ENCODE measurements at regions of chr1 and their contacts with region 1.

Region 1: GRCh38 chr1:62003777-62004176 is 190.9 kb upstream of the L1TD1 start:
- DNase-seq: no peak
- H3K4me3 ChIP-seq: no peak overlapping the region
- H3K27ac ChIP-seq: no peak overlapping the region
- H3K4me1 ChIP-seq: no peaks in the 10 kb centered on the region
- H3K27me3 ChIP-seq: no peaks in the 10 kb centered on the region
- CTCF ChIP-seq: no peak

Region 2: DNA sequence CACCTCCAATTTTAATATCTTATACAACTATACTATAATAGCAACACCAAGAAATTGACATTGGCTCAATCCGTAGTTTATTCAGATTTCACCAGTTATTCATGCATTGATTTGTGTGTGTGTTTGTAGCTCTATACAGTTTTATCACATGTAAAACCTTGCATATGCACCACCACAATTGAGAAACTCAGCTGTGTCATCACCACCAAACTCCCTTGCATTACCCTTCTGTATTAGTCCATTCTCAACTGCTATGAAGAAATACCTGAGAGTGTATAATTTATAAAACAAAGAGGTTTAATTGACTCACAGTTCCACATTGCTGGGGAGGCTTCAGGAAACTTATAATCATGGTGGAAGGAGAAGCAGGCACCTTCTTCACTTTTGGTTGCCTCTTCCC is 99.4 kb before region 1 on chr1:
- CTCF ChIA-PET with region 1: no interaction called
- POLR2A ChIA-PET with region 1: no interaction called
- intact Hi-C with region 1: no loop called
- DNase-seq: no peak
- H3K4me3 ChIP-seq: no peak overlapping the region
- H3K27ac ChIP-seq: no peak overlapping the region
- H3K4me1 ChIP-seq: no peaks in the 10 kb centered on the region
- H3K27me3 ChIP-seq: no peaks in the 10 kb centered on the region
- CTCF ChIP-seq: no peak

Region 3: GRCh38 chr1:61931587-61932279 is 72.0 kb before region 1 on chr1:
- CTCF ChIA-PET with region 1: no interaction called
- POLR2A ChIA-PET with region 1: interaction called, 15 read pairs
- intact Hi-C with region 1: no loop called
- DNase-seq: no peak
- H3K4me3 ChIP-seq: no peak overlapping the region
- H3K27ac ChIP-seq: no peak overlapping the region
- H3K4me1 ChIP-seq: no peaks in the 10 kb centered on the region
- H3K27me3 ChIP-seq: no peaks in the 10 kb centered on the region
- CTCF ChIP-seq: no peak

Region 4: DNA sequence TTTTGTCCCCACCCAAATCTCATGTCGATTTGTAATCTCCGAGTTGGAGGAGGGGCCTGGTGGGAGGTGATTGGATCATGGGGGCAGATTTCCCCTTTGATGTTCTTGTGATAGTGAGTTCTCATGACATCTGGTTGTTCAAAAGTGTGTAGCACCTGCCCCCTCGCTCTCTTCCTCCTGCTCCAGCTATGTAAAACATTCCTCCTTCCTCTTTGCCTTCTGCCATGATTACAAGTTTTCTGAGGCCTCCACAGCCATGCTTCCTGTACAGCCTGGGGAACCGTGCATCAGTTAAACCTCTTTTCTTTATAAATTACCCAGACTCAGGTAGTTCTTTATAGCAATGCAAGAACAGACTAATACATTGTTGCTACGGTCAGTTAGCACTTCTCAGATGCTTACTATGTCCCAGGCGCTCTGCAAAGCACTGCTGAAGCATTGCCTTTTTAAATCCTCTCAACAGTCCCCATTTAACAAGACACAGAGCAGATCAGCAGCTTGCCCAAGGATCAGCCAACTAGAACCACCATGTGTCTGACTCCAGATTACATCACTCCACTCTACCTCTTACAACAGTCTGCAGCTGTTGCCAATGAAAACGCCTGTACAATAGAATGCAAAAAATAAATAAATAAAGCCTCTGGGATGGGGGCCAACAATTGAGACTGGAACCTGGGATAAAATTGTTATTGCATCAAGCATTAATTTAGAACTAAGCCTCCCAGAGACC is 380.7 kb after region 1 on chr1:
- CTCF ChIA-PET with region 1: no interaction called
- POLR2A ChIA-PET with region 1: no interaction called
- intact Hi-C with region 1: no loop called
- DNase-seq: peak in 1 of 2 experiments; percentile 61
- H3K4me3 ChIP-seq: no peak overlapping the region
- H3K27ac ChIP-seq: no peak overlapping the region
- H3K4me1 ChIP-seq: peaks cover 38% of the 10 kb centered on the region
- H3K27me3 ChIP-seq: no peaks in the 10 kb centered on the region
- CTCF ChIP-seq: no peak